Transverse colon (tissue), 4 donors: ENCODE measurements at regions of chr11 and their contacts with region 1.

Region 1: DNA sequence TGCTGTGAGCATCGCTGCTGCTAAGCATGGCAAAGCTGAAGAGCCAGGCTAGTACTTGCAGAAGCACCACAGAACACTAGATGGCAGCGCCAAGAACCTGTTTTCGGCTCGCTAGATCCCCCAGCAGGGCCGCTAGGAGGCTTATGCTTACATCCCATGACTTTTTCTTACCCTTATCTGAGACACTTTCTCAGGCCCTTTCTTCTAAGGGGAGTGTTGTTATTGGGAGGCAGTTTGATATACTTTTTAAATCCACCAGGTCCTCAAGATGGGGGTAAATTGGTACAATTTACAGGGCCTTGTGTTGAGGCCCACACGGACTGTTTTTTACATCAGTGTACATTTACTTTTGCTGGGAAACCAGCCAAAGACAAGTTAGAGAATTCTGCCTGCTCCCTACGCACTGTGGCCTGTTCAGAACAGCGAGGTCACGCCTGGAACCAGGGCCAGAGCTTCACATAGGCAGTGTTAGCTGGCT is 4.0 kb downstream of the TRIM6 start:
- DNase-seq: peak; percentile 73
- H3K4me3 ChIP-seq: no peak overlapping the region
- H3K27ac ChIP-seq: peak overlapping the region; percentile 44 to 65 (median 56)
- H3K4me1 ChIP-seq: peaks cover 0 to 18% (median 6%) of the 10 kb centered on the region in 4 donors
- H3K27me3 ChIP-seq: no peaks in the 10 kb centered on the region
- CTCF ChIP-seq: peak; percentile 66 to 82 (median 74)
- EP300 ChIP-seq: no peak
- POLR2A ChIP-seq: no peak

Region 2: DNA sequence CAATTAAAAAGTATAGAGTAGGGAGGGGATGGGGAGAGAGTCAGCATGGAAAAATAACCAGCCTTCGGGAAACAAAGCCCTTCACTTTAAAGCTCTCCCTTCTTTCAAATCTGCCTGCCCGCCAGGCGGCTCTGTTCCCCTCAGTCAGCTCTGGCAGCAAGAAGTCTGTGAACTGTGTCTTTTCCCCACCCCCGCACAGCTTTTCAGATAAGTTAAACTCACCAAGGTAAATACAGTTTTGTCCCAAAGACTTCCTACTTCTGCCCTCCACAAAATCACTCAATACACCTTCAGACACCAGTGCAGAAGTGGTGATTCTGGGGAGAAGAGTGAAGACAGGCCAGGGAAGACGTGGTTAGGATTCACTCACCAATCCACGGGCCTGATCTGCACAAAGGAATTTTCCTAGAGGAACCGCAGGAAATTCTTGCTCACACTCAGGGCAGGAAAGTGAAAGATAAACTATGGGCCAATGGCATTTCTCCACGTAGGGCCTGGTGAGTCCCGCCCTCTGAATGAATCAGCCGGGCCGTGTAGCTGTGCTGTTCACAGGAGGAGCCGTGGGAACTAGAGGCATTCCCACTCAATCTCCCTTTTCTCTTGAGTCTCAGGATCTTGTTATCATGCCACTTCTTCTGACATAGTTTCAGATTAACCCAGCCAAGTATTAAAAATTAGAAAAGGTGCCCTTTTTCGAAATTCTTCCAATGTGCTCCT is 84.4 kb after region 1 on chr11 and contains the start of gene TRIM5:
- in situ Hi-C with region 1: no loop called
- intact Hi-C with region 1: loop called (anchors 10 kb)
- DNase-seq: peak; percentile 87
- H3K4me3 ChIP-seq: peak within 1 kb of the TSS; percentile 23 to 64 (median 42)
- H3K27ac ChIP-seq: peak within 1 kb of the TSS; percentile 91 to 94 (median 93)
- H3K4me1 ChIP-seq: peaks cover 3 to 39% (median 18%) of the 10 kb centered on the region in 4 donors
- H3K27me3 ChIP-seq: no peaks in the 10 kb centered on the region
- CTCF ChIP-seq: peak; percentile 47 to 77 (median 54)
- EP300 ChIP-seq: peak; percentile 1
- POLR2A ChIP-seq: peak; percentile 51
- total RNA-seq, gene TRIM5: 10.5 to 23.6 (median 16.3) TPM